ENCODE measurements at regions of chr17 and their contacts with region 1.

Region 1: DNA sequence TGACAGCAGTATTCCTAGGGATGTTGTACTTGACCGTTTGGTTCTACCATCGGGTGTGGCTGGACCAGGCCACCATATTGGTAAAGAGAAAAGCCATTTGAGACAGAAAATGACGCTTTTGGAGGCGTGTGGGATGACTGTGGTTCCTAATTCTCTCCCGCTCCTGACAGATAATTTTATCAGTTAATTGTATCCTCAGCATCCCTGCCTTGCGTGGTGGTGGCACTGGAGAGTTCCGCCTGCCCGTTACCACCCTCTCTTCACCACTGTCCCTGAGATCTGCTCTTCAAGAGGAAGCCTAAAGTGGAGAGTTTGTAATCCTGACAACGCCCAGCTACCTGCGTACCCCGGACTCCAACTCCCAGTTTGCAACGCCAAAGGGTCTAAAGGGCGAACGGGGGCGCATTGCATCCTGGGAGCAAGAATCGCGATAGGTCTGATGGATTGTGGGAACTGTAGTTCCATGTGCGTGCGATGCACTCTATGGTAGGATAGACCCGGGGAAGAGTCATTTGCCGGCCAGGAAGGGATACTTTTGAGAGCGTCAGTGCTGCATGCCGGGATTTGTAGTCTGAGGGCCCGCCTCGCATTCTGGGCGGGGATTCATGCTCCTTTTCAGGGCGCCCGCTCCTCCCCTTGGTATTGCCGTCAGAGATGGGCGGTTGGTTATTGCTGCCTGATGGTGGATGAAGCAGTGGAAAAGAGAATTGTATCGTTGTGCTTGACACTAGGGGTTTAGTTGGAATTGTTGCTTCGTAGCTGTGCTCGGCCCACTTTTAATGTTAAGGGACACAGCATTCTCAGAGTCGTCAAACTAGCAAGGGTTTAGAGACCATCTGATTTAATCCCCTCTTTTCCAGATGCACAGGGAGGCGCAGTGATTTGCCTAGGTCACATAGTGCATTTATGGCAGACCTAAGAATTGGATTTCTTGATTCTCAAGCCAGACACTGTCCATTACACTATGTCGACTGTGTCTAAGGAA is 965 bp upstream of the PHF12 start:
- DNase-seq: peak; percentile 91 to 98 (median 97)
- H3K4me3 ChIP-seq: peak overlapping the region; percentile 98
- H3K4me3 Mint-ChIP-seq: no peak overlapping the region
- H3K27ac ChIP-seq: peak overlapping the region; percentile 85
- H3K27ac Mint-ChIP-seq: no peak overlapping the region
- H3K4me1 ChIP-seq: peaks cover 27% of the 10 kb centered on the region
- H3K4me1 Mint-ChIP-seq: peaks cover 15 to 17% (median 15%) of the 10 kb centered on the region in 3 donors
- H3K27me3 ChIP-seq: no peaks in the 10 kb centered on the region
- H3K27me3 Mint-ChIP-seq: peaks cover 0 to 4% of the 10 kb centered on the region in 2 donors

Region 2: GRCh38 chr17:28720247-28720996 is 231.9 kb before region 1 on chr17:
- CTCF ChIA-PET with region 1: interaction called, 19 read pairs
- POLR2A ChIA-PET with region 1: interaction called, 65 read pairs
- DNase-seq: peak in 3 of 5 donors; percentile 27 to 59 (median 33)
- H3K4me3 ChIP-seq: peak overlapping the region; percentile 74
- H3K4me3 Mint-ChIP-seq: peak overlapping the region; percentile 94 to 99 (median 98)
- H3K27ac ChIP-seq: peak overlapping the region; percentile 73
- H3K27ac Mint-ChIP-seq: peak overlapping the region; percentile 95 to 98 (median 98)
- H3K4me1 ChIP-seq: peaks cover 38% of the 10 kb centered on the region
- H3K4me1 Mint-ChIP-seq: peaks cover 57 to 71% (median 63%) of the 10 kb centered on the region in 3 donors
- H3K27me3 ChIP-seq: peaks cover 8% of the 10 kb centered on the region
- H3K27me3 Mint-ChIP-seq: peaks cover 8 to 15% of the 10 kb centered on the region in 2 donors

Region 3: GRCh38 chr17:28842282-28843012 is 109.8 kb before region 1 on chr17 and contains the start of gene FAM222B:
- CTCF ChIA-PET with region 1: interaction called, 10 read pairs
- POLR2A ChIA-PET with region 1: interaction called, 8 read pairs
- DNase-seq: peak; percentile 82 to 91 (median 85)
- H3K4me3 ChIP-seq: peak within 1 kb of the TSS; percentile 82
- H3K4me3 Mint-ChIP-seq: peak within 1 kb of the TSS; percentile 95 to 99 (median 98)
- H3K27ac ChIP-seq: peak within 1 kb of the TSS; percentile 80
- H3K27ac Mint-ChIP-seq: peak within 1 kb of the TSS; percentile 84 to 98 (median 98)
- H3K4me1 ChIP-seq: peaks cover 11% of the 10 kb centered on the region
- H3K4me1 Mint-ChIP-seq: peaks cover 20 to 35% (median 31%) of the 10 kb centered on the region in 3 donors
- H3K27me3 ChIP-seq: no peaks in the 10 kb centered on the region
- H3K27me3 Mint-ChIP-seq: no peaks in the 10 kb centered on the region
- total RNA-seq, gene FAM222B: 20.6 to 21.5 TPM

Region 4: GRCh38 chr17:28871056-28871579 is 81.2 kb before region 1 on chr17:
- CTCF ChIA-PET with region 1: no interaction called
- POLR2A ChIA-PET with region 1: no interaction called
- DNase-seq: peak in 3 of 5 donors; percentile 29 to 50 (median 48)
- H3K4me3 ChIP-seq: peak overlapping the region; percentile 17
- H3K4me3 Mint-ChIP-seq: peak overlapping the region in 2 of 7 donors; percentile 37 to 44
- H3K27ac ChIP-seq: peak overlapping the region; percentile 49
- H3K27ac Mint-ChIP-seq: peak overlapping the region; percentile 69 to 96 (median 93)
- H3K4me1 ChIP-seq: peaks cover 12% of the 10 kb centered on the region
- H3K4me1 Mint-ChIP-seq: peaks cover 7 to 10% (median 7%) of the 10 kb centered on the region in 3 donors
- H3K27me3 ChIP-seq: no peaks in the 10 kb centered on the region
- H3K27me3 Mint-ChIP-seq: no peaks in the 10 kb centered on the region

Region 5: DNA sequence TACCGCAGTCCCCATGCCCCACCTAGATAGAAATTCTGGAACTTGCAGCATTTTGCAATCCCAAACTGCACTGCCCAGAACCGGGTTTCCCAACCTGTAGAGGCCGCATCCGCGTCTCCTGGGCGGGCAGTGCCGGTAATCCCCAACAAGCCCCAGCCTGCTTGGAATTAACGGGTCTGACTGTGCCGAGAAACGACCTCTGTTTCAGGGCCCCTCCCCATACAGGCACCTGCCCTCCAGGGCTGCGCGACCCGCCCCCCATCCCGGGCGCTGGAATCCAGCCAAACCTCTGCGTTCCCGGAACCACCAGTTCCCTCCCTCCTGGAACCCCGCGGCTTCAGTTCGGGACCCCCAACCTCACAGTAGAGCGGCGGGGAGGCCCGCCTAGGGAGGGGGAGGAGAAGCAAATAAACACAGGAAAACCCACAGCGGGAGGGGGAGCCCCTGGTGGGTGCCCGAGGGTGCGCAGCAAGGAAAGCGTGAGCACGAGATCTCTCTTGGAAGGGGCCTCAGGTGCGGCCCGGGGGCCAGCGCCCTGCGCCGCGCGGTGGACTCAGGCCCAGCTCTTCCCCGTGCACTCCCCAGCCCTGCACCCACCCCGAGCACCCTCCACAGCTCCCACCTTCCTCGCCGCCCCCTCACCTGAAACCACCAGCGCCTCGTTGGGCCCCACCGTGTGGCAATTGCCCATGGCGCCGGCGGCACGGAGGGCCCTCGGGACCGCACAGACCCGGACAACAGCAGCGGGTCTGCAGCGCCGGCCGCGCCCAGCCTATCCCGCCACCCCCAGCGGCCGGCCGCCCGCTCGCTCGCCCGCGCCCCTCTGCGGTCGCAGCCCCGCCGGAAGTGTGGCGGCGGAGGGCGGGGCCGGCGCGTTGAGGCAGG is 55.2 kb before region 1 on chr17 and contains the start of gene FLOT2:
- CTCF ChIA-PET with region 1: interaction called, 25 read pairs
- POLR2A ChIA-PET with region 1: interaction called, 28 read pairs
- DNase-seq: peak; percentile 49 to 81 (median 68)
- H3K4me3 ChIP-seq: peak within 1 kb of the TSS; percentile 93
- H3K4me3 Mint-ChIP-seq: peak within 1 kb of the TSS; percentile 88 to 99 (median 97)
- H3K27ac ChIP-seq: peak within 1 kb of the TSS; percentile 84
- H3K27ac Mint-ChIP-seq: peak within 1 kb of the TSS; percentile 94 to 98 (median 96)
- H3K4me1 ChIP-seq: peaks cover 72% of the 10 kb centered on the region
- H3K4me1 Mint-ChIP-seq: peaks cover 62 to 80% (median 66%) of the 10 kb centered on the region in 3 donors
- H3K27me3 ChIP-seq: no peaks in the 10 kb centered on the region
- H3K27me3 Mint-ChIP-seq: no peaks in the 10 kb centered on the region
- total RNA-seq, gene FLOT2: 113 to 115 TPM

Region 6: GRCh38 chr17:28902819-28903545 is 49.3 kb before region 1 on chr17 and contains the start of gene DHRS13:
- CTCF ChIA-PET with region 1: interaction called, 25 read pairs
- POLR2A ChIA-PET with region 1: interaction called, 28 read pairs
- DNase-seq: peak; percentile 93 to 97 (median 95)
- H3K4me3 ChIP-seq: peak within 1 kb of the TSS; percentile 71
- H3K4me3 Mint-ChIP-seq: peak within 1 kb of the TSS; percentile 87 to 95 (median 92)
- H3K27ac ChIP-seq: peak within 1 kb of the TSS; percentile 82
- H3K27ac Mint-ChIP-seq: peak within 1 kb of the TSS; percentile 78 to 98 (median 96)
- H3K4me1 ChIP-seq: peaks cover 42% of the 10 kb centered on the region
- H3K4me1 Mint-ChIP-seq: peaks cover 33 to 48% (median 37%) of the 10 kb centered on the region in 3 donors
- H3K27me3 ChIP-seq: no peaks in the 10 kb centered on the region
- H3K27me3 Mint-ChIP-seq: no peaks in the 10 kb centered on the region
- total RNA-seq, gene DHRS13: 32.6 to 34.7 TPM

Region 7: GRCh38 chr17:28925912-28926365 is 26.3 kb before region 1 on chr17:
- CTCF ChIA-PET with region 1: interaction called, 31 read pairs
- POLR2A ChIA-PET with region 1: interaction called, 63 read pairs
- DNase-seq: peak; percentile 32 to 89 (median 79)
- H3K4me3 ChIP-seq: peak overlapping the region; percentile 21
- H3K4me3 Mint-ChIP-seq: peak overlapping the region; percentile 3 to 81 (median 63)
- H3K27ac ChIP-seq: peak overlapping the region; percentile 77
- H3K27ac Mint-ChIP-seq: peak overlapping the region; percentile 91 to 99 (median 95)
- H3K4me1 ChIP-seq: peaks cover 57% of the 10 kb centered on the region
- H3K4me1 Mint-ChIP-seq: peaks cover 64 to 86% (median 70%) of the 10 kb centered on the region in 3 donors
- H3K27me3 ChIP-seq: no peaks in the 10 kb centered on the region
- H3K27me3 Mint-ChIP-seq: no peaks in the 10 kb centered on the region

Region 8: GRCh38 chr17:28967221-28968140 is 15.2 kb after region 1 on chr17:
- CTCF ChIA-PET with region 1: interaction called, 27 read pairs
- POLR2A ChIA-PET with region 1: no interaction called
- DNase-seq: peak in 1 of 5 donors; percentile 18
- H3K4me3 ChIP-seq: no peak overlapping the region
- H3K4me3 Mint-ChIP-seq: no peak overlapping the region
- H3K27ac ChIP-seq: no peak overlapping the region
- H3K27ac Mint-ChIP-seq: no peak overlapping the region
- H3K4me1 ChIP-seq: no peaks in the 10 kb centered on the region
- H3K4me1 Mint-ChIP-seq: peaks cover 0 to 3% (median 0%) of the 10 kb centered on the region in 3 donors
- H3K27me3 ChIP-seq: no peaks in the 10 kb centered on the region
- H3K27me3 Mint-ChIP-seq: peaks cover 8 to 26% of the 10 kb centered on the region in 2 donors

Region 9: DNA sequence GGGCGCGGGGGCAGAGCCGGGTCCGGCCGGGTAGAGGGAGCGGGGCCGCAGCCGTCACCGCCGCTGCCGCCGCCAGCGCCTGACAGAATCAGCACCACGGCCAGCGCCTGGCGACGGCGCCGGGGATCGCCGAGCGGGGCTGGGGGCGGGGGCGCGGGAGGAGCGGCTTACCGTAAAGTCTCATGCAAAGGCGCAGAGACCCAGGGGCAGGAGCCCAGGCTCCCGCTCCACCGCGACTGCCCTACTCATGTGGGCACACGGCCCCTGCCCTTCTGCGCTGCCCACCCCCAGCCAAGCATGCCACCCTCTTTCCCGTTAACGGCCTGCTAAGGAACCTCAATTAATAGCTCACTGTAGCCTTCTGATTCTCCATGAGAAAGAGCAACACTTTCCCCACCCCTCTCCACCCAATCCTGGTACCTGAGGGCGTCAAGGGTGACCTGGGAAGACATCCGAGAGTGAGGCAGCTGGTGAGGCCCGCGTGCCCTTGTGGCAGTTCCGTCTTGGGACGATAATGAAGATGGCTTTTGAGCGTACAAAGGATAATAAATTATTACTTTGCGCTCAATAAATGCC is 53.7 kb after region 1 on chr17 and contains the start of gene SEZ6:
- CTCF ChIA-PET with region 1: no interaction called
- POLR2A ChIA-PET with region 1: no interaction called
- DNase-seq: peak; percentile 31 to 63 (median 40)
- H3K4me3 ChIP-seq: no peak within 1 kb of the TSS
- H3K4me3 Mint-ChIP-seq: peak within 1 kb of the TSS in 1 of 7 donors; percentile 32
- H3K27ac ChIP-seq: no peak within 1 kb of the TSS
- H3K27ac Mint-ChIP-seq: no peak within 1 kb of the TSS
- H3K4me1 ChIP-seq: no peaks in the 10 kb centered on the region
- H3K4me1 Mint-ChIP-seq: peaks cover 2 to 8% (median 5%) of the 10 kb centered on the region in 3 donors
- H3K27me3 ChIP-seq: peaks cover 36% of the 10 kb centered on the region
- H3K27me3 Mint-ChIP-seq: peaks cover 51 to 68% of the 10 kb centered on the region in 2 donors
- total RNA-seq, gene SEZ6: not detected

Measured in CD8-positive, alpha-beta memory T cell (primary cell).